ENCODE measurements at regions of chr4 and their contacts with region 1.

Region 1: GRCh38 chr4:182975806-182976205 is 58.6 kb upstream of the DCTD start:
- DNase-seq: no peak
- H3K4me3 Mint-ChIP-seq: peak overlapping the region; percentile 2
- H3K27ac Mint-ChIP-seq: peak overlapping the region; percentile 66
- H3K4me1 Mint-ChIP-seq: peaks cover 11% of the 10 kb centered on the region
- H3K27me3 Mint-ChIP-seq: peaks cover 6% of the 10 kb centered on the region

Region 2: GRCh38 chr4:182155806-182156205 is 820.0 kb before region 1 on chr4:
- intact Hi-C with region 1: no loop called
- DNase-seq: no peak
- H3K4me3 Mint-ChIP-seq: no peak overlapping the region
- H3K27ac Mint-ChIP-seq: no peak overlapping the region
- H3K4me1 Mint-ChIP-seq: no peaks in the 10 kb centered on the region
- H3K27me3 Mint-ChIP-seq: peaks cover 2% of the 10 kb centered on the region

Region 3: DNA sequence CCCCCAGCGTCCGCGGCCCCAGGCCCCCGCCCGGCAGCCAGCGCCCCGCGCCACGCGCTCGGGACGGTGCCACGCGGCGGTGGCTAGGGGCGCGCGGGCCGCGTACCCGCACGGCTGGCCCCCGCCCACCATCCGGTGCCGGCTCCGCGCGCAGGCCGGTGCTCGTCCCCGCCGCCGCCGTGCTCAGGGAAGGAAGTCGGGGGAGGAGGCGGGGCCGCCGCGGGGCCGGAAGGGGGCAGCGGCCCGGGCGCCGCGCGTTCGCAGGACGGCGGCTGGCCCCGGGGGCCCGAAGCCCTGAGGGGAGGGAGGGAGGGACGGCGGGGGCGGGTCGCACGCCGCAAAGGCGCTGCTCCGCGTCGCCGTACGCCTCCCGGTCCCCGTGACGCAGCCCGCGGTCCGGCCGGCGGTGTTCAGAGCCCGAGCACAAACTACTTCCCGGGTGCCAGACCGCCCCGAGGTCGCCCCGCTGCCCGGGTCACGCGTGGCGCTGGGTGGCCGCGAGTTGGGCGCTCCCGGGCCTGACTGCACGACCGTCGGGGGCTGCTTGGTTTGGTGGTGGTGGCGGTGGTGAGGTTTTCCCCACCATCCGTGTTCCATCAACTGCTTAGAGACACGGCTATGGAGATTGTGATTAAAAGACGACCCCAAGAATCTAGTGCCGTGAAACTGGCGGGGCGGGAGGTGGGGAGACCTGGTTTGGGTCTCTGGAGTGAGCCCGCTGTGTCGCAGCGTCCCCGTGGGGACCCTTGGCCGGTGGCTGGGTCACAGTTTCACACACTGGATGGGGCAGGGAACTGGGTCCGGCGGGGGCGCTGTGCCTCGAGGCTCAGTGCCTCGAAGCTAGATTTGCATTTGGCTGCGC is 58.4 kb before region 1 on chr4 and contains the start of gene DCTD:
- intact Hi-C with region 1: loop called (anchors 5 kb)
- DNase-seq: peak; percentile 95
- H3K4me3 Mint-ChIP-seq: peak within 1 kb of the TSS; percentile 87
- H3K27ac Mint-ChIP-seq: peak within 1 kb of the TSS; percentile 93
- H3K4me1 Mint-ChIP-seq: peaks cover 44% of the 10 kb centered on the region
- H3K27me3 Mint-ChIP-seq: peaks cover 5% of the 10 kb centered on the region
- total RNA-seq, gene DCTD: 125 and 129 TPM in 2 replicates

Region 4: DNA sequence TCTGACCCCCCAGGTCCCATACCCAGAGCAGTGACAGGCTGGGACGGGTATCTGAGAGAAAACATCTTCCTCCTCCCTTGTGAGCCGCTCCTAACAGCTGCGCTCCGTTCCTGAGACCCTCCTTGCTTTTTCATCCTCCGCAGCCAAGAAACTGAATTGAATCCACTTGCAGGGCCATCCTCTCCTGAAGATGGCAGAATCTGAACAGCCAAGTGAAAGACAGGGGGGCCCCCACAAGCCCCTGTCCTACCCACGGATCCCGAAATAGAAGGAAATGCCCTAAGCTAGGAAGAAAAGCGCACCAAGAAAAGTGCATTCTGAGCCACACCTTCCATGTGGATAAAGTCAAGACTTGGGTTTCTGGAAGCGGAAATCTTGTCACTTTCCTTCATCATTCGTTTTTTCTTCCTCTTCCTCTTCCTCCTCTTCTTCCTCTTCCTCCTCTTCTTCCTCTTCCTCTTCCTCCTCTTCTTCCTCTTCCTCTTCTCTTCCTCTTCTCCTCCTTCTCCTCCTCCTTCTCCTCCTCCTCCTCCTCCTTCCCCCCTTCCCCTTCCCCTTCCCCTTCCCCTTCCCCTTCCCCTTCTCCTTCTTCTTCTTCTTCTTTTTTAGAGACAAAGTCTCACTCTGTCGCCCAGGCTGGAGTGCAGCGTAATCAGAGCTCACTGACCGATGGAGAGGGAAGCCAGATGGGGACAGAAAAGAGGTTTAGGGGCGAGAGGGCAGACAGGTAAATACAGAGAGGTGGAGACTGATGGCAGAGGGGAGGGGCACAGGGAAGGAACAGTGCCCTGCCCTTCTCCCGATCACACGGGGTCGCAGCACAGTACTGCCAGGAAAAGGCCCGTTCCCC is 37.3 kb after region 1 on chr4:
- intact Hi-C with region 1: no loop called
- DNase-seq: no peak
- H3K4me3 Mint-ChIP-seq: no peak overlapping the region
- H3K27ac Mint-ChIP-seq: no peak overlapping the region
- H3K4me1 Mint-ChIP-seq: no peaks in the 10 kb centered on the region
- H3K27me3 Mint-ChIP-seq: no peaks in the 10 kb centered on the region